ENCODE measurements at regions of chr9 and their contacts with region 1.

Region 1: GRCh38 chr9:122350638-122351355 is 20.0 kb upstream of the PTGS1 start:
- DNase-seq: peak; percentile 80 to 84
- ATAC-seq: peak; percentile 69 to 87 (median 84)
- H3K4me3 ChIP-seq: no peak overlapping the region
- H3K27ac ChIP-seq: no peak overlapping the region
- H3K4me1 ChIP-seq: peaks cover 7 to 32% (median 21%) of the 10 kb centered on the region in 9 donors
- H3K27me3 ChIP-seq: peaks cover 0 to 14% (median 0%) of the 10 kb centered on the region in 7 donors
- CTCF ChIP-seq: peak; percentile 96 to 99 (median 97)

Region 2: GRCh38 chr9:122099271-122099869 is 251.4 kb before region 1 on chr9:
- intact Hi-C with region 1: loop called in 9 of 10 experiments (anchors 1 to 5 kb)
- DNase-seq: peak; percentile 79 to 85
- ATAC-seq: peak; percentile 54 to 91 (median 87)
- H3K4me3 ChIP-seq: peak overlapping the region in 2 of 10 donors; percentile 10 to 23
- H3K27ac ChIP-seq: no peak overlapping the region
- H3K4me1 ChIP-seq: peaks cover 0 to 12% (median 3%) of the 10 kb centered on the region in 9 donors
- H3K27me3 ChIP-seq: no peaks in the 10 kb centered on the region
- CTCF ChIP-seq: peak; percentile 81 to 93 (median 87)

Region 3: GRCh38 chr9:122125158-122125508 is 225.7 kb before region 1 on chr9:
- intact Hi-C with region 1: loop called (anchors 1 to 2 kb)
- DNase-seq: peak; percentile 79 to 85
- ATAC-seq: peak; percentile 78 to 91 (median 84)
- H3K4me3 ChIP-seq: no peak overlapping the region
- H3K27ac ChIP-seq: no peak overlapping the region
- H3K4me1 ChIP-seq: peaks cover 12 to 47% (median 30%) of the 10 kb centered on the region in 9 donors
- H3K27me3 ChIP-seq: peaks cover 0 to 32% (median 3%) of the 10 kb centered on the region in 7 donors
- CTCF ChIP-seq: peak in 8 of 9 donors; percentile 90 to 98 (median 96)

Region 4: DNA sequence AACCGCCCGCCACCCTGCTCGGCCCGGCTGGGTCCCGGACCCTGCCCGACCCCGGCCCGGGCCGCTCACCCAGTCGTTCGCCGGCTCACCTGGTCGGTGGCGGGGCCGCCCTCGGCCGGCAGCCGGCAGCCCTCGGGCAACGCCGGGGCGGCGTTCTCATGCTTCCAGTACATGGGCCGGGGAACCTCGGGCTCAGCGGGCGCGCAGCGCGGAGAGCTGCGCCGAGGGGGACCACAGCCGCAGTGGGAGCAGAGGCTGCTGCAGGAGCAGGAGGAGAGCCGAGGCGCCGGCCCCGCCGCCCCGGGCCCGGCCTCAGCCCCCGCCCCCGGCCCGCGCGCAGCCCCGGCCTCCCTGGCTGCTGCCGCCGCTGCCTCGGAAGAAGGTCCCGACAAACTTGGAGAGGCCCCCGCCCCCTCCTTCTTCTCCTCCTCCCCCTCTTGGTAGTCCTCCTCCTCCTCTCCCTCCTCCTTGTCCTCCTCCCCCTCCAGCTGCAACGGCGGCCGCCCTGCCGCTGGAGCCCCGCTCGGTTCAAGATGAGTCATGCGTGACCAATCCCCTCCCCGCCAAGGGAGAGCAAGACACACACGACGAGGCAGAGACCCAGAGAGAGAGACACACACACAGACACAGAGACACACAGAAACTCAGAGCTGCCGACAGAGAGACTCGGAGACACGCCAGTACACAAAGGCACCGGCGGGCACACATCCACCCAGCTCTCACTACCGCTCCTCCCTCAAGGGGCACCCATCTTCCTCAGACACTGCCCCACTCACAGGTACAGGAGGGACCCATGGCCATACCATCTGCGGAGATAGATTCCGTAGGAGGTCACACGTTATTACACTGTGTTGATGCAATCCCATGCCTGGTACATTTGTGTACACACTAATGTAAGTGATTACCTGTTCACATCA is 122.0 kb before region 1 on chr9 and contains the start of gene LHX6:
- intact Hi-C with region 1: loop called in 1 of 10 experiments (anchors 10 kb)
- DNase-seq: no peak
- ATAC-seq: peak in 4 of 8 donors; percentile 12 to 58 (median 42)
- H3K4me3 ChIP-seq: peak within 1 kb of the TSS; percentile 38 to 62 (median 52)
- H3K27ac ChIP-seq: peak within 1 kb of the TSS in 8 of 10 donors; percentile 19 to 70 (median 48)
- H3K4me1 ChIP-seq: peaks cover 4 to 33% (median 26%) of the 10 kb centered on the region in 9 donors
- H3K27me3 ChIP-seq: peaks cover 16 to 92% (median 75%) of the 10 kb centered on the region in 7 donors
- CTCF ChIP-seq: no peak
- total RNA-seq, gene LHX6: 1.9 to 9.4 (median 4.8) TPM

Measured in heart right ventricle (tissue), 16 donors.